GM10248 (cell line): ENCODE measurements at regions of chr3 and their contacts with region 1.

Region 1: GRCh38 chr3:186617038-186617946 is 4.4 kb downstream of the AHSG start:
- DNase-seq: peak; percentile 91
- CTCF ChIP-seq: peak; percentile 95

Region 2: GRCh38 chr3:185479373-185479945 is 1137.8 kb before region 1 on chr3:
- CTCF ChIA-PET with region 1: no interaction called
- POLR2A ChIA-PET with region 1: no interaction called
- DNase-seq: no peak
- CTCF ChIP-seq: no peak

Region 3: DNA sequence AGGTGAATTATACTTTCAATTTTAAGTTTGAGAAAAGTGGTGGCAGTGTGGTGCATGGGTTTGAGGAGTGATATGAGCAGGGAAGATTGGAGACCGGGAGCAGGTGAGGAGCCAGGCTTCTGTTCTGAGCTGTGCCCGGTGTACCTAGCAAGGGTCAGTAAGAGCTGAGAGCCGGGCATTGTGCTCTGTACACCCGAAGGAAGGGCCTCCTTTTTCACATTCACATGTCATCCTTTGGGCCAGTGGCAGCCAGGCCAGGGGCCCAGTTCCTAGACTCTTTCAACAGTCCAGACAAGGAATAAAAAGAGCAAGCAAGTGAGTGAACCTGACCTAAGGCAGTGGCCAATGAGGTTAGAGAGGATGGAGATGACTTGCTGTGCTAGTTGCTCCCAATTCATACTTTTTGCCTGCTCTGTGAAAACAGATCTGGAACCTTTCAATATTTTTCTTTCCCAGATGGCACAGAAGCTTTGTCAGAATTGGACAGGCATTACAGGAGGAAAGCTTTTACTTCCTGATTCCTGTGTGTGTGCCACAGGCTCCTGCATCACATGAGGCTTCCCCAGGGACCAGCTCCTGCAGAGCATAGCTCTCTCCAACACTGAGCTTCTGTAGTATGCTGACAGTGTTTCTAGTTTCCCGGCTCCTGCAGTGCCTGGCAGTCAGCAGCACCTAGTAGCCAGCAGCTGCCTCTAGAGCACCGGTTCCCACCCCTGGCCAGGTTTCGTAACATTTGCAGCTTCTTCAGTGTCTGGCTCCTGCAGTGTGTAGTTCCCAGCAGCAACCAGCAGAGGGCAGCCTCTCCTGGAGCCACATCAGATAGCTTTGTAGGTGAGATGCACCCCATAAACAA is 674.2 kb before region 1 on chr3:
- CTCF ChIA-PET with region 1: interaction called, 65 read pairs
- POLR2A ChIA-PET with region 1: no interaction called
- DNase-seq: peak; percentile 84
- CTCF ChIP-seq: peak; percentile 99

Region 4: GRCh38 chr3:185976977-185977678 is 640.2 kb before region 1 on chr3:
- CTCF ChIA-PET with region 1: interaction called, 105 read pairs
- POLR2A ChIA-PET with region 1: no interaction called
- DNase-seq: peak; percentile 79
- CTCF ChIP-seq: peak; percentile 87

Region 5: GRCh38 chr3:186259612-186260383 is 357.5 kb before region 1 on chr3:
- CTCF ChIA-PET with region 1: interaction called, 35 read pairs
- POLR2A ChIA-PET with region 1: no interaction called
- DNase-seq: peak; percentile 86
- CTCF ChIP-seq: peak; percentile 97

Region 6: GRCh38 chr3:186589121-186589520 is 28.2 kb before region 1 on chr3:
- CTCF ChIA-PET with region 1: interaction called, 155 read pairs
- POLR2A ChIA-PET with region 1: no interaction called
- DNase-seq: no peak
- CTCF ChIP-seq: no peak

Region 7: GRCh38 chr3:186653080-186653707 is 35.9 kb after region 1 on chr3:
- CTCF ChIA-PET with region 1: interaction called, 15 read pairs
- POLR2A ChIA-PET with region 1: no interaction called
- DNase-seq: peak; percentile 73
- CTCF ChIP-seq: no peak

Region 8: DNA sequence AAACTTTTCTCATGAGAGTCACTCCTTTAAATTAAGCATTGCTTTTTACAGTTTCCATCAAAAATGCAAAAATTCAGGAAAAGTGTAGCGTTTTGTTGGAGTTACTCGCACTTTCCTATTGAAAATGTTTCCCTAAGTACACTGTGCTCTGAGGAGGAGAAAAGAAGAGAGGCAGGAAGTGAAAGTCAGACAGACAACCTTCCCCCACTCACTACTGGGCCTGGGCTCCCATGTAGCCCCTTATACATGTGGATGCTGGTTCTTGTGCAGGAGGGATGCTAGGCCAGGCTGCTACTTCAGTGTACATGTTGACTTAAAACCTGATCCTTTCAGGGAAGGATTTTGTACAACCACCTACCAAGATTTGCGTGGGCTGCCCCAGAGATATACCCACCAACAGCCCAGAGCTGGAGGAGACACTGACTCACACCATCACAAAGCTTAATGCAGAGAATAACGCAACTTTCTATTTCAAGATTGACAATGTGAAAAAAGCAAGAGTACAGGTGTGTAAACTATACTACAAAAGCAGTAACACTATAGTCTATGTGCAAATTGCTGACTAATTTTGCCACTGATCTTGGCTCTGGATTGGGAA is 115.0 kb after region 1 on chr3:
- CTCF ChIA-PET with region 1: no interaction called
- POLR2A ChIA-PET with region 1: no interaction called
- DNase-seq: no peak
- CTCF ChIP-seq: no peak

Region 9: DNA sequence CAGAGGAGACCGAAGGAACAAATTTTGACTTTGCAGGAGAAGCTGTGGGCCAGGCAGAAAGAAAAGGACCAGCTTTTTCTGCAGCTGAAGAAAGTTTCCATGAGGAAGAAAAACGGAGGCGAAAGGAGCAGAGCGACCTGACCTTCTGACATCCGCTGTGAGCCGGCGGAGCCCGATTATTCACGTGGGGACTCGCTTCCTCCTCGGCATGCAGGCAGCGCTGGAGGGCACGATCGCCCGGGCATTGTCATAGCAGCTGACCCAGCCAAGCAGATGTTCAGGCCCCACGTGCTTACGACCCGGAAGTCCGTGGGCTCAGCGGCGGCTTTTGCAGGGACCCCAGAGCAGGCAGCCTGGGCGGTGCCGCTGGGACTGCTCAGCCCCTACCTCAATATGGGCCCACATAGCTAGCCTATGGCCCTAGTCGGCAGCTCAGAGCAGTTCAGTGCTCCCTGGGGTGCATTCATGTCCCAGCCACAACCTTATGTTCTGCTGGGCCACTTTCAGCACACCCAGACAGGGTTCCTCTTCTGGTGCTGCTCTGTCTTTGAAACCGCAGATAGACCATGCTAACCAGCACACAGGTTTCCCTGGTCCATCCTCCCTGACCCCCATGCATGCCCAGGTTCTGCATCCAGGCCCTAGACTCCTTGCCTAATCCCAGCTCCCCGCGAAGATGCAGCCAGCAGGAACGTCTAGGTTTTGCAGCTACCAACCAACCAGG is 155.6 kb after region 1 on chr3:
- CTCF ChIA-PET with region 1: interaction called, 16 read pairs
- POLR2A ChIA-PET with region 1: no interaction called
- DNase-seq: peak; percentile 84
- CTCF ChIP-seq: no peak